ENCODE measurements at regions of chr14 and their contacts with region 1.

Region 1: GRCh38 chr14:20613094-20614037 is 22.2 kb upstream of the RNASE12 start:
- DNase-seq: peak; percentile 43 to 90
- H3K4me3 ChIP-seq: peak overlapping the region; percentile 69 to 70
- H3K27ac ChIP-seq: peak overlapping the region; percentile 82 to 85
- H3K4me1 ChIP-seq: no peaks in the 10 kb centered on the region
- H3K27me3 ChIP-seq: no peaks in the 10 kb centered on the region
- CTCF ChIP-seq: peak; percentile 55 to 87 (median 75)

Region 2: GRCh38 chr14:20327005-20327869 is 286.1 kb before region 1 on chr14:
- intact Hi-C with region 1: loop called (anchors 2 kb)
- DNase-seq: no peak
- H3K4me3 ChIP-seq: no peak overlapping the region
- H3K27ac ChIP-seq: peak overlapping the region in 1 of 2 donors; percentile 19
- H3K4me1 ChIP-seq: peaks cover 0 to 8% of the 10 kb centered on the region in 2 donors
- H3K27me3 ChIP-seq: no peaks in the 10 kb centered on the region
- CTCF ChIP-seq: peak; percentile 56 to 78 (median 64)

Region 3: DNA sequence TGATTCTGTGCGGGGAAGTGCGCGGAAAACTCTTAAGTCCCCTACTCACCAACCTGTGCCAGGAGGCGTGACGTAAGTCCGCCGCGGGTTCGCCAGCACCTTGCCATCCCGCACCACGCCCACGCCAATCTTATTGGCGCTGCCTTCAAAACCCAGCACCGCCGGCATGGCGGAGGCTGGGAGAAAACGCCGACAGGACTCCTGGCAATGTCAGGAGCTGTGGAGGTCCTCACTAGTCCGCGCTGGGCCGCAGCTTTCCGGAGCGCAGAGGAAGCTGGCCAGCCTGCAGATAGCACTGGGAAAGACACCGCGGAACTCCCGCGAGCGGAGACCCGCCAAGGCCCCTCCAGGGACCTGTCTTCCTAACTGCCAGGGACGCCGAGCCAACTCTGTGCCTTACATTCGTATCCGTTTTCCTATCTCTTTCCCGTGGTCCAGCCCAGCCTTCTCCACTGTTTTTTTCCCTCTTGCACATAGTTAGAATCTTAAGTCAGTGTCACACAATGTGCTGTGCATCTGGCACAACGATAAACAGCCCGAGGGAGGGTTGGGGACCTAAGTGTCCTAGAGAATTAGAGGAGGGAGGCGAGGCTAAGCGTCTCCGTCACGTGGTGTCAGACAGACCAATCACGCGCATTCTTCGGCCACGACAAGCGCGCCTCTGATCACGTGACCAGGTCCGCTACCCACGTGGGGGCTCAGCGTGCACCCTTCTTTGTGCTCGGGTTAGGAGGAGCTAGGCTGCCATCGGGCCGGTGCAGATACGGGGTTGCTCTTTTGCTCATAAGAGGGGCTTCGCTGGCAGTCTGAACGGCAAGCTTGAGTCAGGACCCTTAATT is 158.6 kb before region 1 on chr14 and contains the starts of genes APEX1 and OSGEP:
- intact Hi-C with region 1: loop called (anchors 5 kb)
- DNase-seq: peak; percentile 93 to 99
- H3K4me3 ChIP-seq: peak within 1 kb of the TSS; percentile 83 to 99
- H3K27ac ChIP-seq: peak within 1 kb of the TSS; percentile 93 to 97
- H3K4me1 ChIP-seq: peaks cover 7 to 19% of the 10 kb centered on the region in 2 donors
- H3K27me3 ChIP-seq: no peaks in the 10 kb centered on the region
- CTCF ChIP-seq: no peak
- total RNA-seq, gene APEX1: 21.5 TPM
- total RNA-seq, gene OSGEP: 26.7 TPM

Region 4: GRCh38 chr14:20624495-20625070 is 11.2 kb after region 1 on chr14:
- intact Hi-C with region 1: loop called (anchors 1 kb)
- DNase-seq: peak in 1 of 2 donors; percentile 79
- H3K4me3 ChIP-seq: peak overlapping the region; percentile 12 to 57
- H3K27ac ChIP-seq: peak overlapping the region in 1 of 2 donors; percentile 43
- H3K4me1 ChIP-seq: peaks cover 0 to 3% of the 10 kb centered on the region in 2 donors
- H3K27me3 ChIP-seq: no peaks in the 10 kb centered on the region
- CTCF ChIP-seq: no peak

Region 5: DNA sequence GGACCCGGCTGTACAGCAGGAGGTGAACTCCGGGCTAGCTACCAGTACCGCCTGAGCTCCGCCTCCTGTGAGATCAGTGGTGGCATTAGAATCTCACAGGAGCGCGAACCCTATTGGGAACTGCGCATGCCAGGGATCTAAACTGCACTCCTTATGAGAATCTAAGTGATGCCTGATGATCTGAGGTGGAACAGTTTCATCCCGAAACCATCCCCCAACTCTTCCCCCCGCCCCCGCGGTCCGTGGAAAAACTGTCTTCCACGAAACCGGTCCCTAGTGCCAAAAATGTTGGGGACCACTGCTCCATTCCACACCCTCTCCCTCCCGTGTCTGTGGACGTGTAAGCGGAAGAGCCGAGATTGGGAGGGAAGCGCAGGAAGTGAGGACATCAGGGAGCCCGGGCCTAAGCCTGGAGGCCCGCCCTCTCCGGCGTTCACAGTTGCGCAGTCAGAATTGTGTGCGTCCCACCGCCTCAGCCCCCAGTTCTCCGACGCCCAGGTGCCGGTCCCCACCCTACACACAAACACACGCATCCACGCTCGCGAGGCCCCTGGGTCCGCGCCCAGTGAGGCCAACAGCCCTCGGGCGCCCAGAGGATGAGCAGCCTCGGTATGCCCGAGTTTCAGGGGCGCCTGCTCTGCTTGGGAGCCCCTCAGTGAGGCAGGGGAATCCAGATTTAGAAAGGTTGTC is 69.2 kb after region 1 on chr14:
- intact Hi-C with region 1: loop called (anchors 1 kb)
- DNase-seq: peak; percentile 80 to 95
- H3K4me3 ChIP-seq: peak overlapping the region; percentile 89 to 94
- H3K27ac ChIP-seq: peak overlapping the region; percentile 100
- H3K4me1 ChIP-seq: peaks cover 13 to 35% of the 10 kb centered on the region in 2 donors
- H3K27me3 ChIP-seq: no peaks in the 10 kb centered on the region
- CTCF ChIP-seq: peak in 2 of 3 experiments; percentile 9 to 37

Region 6: DNA sequence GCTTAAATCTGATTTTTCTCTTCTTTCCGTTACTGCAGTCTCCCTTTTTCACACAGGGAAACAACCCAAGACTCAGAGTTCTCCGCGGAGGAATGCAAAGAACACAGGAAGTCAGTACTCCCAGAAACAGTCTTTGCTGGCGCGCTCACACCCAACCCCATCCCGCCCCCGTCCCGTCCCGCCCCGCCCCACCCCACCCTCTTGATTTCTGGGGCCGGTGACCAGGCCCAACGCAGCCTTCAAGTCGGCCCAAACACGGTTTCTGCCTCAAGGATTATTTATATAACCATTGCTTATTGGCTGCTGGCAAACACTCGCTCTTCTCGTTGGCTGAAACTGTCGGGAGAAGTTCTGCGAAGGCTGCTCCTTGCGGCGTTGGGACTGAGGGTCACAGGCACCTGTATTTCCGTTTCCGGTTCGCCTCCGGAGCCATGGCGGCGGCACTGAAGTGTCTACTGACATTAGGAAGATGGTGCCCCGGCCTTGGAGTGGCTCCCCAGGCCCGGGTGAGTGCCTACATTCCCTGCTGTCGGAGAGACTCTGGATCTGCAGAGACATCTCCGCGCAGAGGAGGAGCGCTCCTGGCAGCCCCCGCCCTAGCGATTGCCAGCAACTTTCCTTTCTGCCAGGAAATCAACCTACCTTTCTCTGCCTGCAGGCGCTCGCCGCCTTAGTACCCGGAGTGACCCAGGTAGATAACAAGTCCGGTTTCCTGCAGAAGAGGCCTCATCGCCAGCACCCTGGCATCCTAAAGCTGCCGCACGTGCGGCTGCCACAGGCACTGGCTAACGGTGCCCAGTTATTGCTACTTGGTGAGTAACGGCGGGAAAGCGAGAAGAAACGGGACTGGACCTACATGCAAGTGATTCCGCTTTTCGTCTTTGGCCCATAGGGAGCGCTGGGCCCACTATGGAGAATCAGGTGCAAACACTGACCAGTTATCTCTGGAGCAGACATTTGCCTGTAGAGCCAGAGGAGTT is 376.5 kb after region 1 on chr14 and contains the start of gene METTL17:
- intact Hi-C with region 1: loop called (anchors 5 kb)
- DNase-seq: peak; percentile 65 to 97
- H3K4me3 ChIP-seq: peak within 1 kb of the TSS; percentile 88 to 97
- H3K27ac ChIP-seq: peak within 1 kb of the TSS; percentile 88 to 94
- H3K4me1 ChIP-seq: peaks cover 27 to 38% of the 10 kb centered on the region in 2 donors
- H3K27me3 ChIP-seq: no peaks in the 10 kb centered on the region
- CTCF ChIP-seq: no peak
- total RNA-seq, gene METTL17: 38.8 TPM

Region 7: GRCh38 chr14:21092273-21093011 is 479.1 kb after region 1 on chr14:
- intact Hi-C with region 1: loop called (anchors 10 kb)
- DNase-seq: peak in 1 of 2 donors; percentile 86
- H3K4me3 ChIP-seq: no peak overlapping the region
- H3K27ac ChIP-seq: peak overlapping the region in 1 of 2 donors; percentile 36
- H3K4me1 ChIP-seq: peaks cover 0 to 8% of the 10 kb centered on the region in 2 donors
- H3K27me3 ChIP-seq: no peaks in the 10 kb centered on the region
- CTCF ChIP-seq: peak; percentile 100

Measured in ascending aorta (tissue), 2 donors.